ENCODE measurements at regions of chr4 and their contacts with region 1.

Region 1: DNA sequence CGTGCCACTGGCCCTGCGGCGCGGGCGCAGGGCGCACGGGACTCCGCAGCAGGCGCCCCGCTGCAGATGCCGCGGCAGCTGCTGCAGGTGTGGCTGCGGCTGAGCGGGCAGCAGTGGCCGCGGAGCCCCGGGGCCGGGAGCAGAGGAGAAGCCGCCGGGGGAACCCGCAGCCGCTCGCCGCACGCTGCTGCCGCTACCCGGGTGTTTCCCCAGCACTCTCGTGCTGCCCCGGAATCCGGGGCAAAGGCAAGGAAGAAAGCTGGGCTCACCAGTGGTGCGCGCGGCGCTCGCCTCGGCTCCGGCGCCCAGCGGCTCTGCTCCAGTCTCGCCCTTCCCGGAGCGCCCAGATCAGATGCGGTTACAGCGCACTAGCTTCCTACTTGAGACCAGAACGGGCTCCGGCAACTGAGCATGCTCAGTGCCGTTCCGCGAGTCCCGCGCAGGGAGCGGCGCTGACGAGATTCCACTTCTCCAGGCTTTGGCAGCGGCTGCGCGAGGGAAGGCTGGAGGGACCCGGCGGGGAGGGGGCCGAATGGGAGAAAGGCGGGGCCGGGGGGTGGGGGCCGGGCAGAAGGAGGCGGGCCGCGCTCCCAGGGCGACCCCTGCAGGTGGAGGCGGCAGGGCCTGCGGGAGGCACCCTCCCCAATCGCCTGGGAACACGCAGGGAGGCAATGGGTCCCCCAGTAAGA is at the start of gene APBB2:
- DNase-seq: peak; percentile 96
- ATAC-seq: peak; percentile 93 to 94
- total RNA-seq, gene APBB2: 53.0 to 56.5 TPM

Region 2: DNA sequence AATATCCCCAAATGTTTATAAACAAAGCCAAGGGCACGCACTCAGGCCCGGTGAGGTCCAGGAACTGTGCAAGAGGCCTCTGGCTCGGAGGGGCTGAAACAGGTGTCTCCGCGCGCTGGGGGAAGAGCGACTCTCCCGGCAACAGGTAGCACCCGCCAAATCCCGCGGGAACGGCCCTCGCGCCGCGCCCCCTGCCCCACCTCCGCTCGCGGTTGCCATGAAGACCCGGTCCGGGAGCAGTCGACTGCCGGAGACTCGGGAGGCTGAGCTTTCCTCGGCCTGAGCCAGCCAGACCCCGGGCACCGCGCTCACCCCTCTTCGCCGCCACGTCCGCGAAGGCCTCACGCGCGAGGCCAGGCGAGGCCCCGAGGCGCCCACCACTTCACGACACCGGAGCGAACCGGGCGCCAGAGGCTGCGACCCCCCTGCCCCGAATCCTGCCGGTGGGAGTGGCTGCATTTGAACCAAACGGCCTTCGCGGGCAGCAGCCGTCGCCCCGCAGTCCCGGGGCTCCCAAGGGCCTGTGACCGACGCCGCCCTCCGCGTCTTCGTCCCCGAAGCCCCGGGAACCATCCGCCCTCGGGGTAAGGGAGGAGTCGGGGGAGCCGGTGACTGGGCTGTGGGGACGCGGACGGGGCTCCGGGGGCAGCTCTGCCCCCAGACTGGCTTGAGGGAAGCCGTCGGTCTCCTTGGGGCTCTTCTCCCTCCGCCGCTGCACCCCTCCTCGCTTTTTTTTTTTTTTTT is 464.4 kb before region 1 on chr4 and contains the start of gene NSUN7:
- intact Hi-C with region 1: loop called in 1 of 2 experiments (anchors 10 kb)
- DNase-seq: peak; percentile 62
- ATAC-seq: peak; percentile 91 to 92
- total RNA-seq, gene NSUN7: 4.2 to 6.6 TPM

Region 3: GRCh38 chr4:40924096-40924792 is 290.0 kb before region 1 on chr4:
- intact Hi-C with region 1: loop called (anchors 5 kb)
- DNase-seq: peak; percentile 68
- ATAC-seq: peak; percentile 62 to 67

Region 4: GRCh38 chr4:40976343-40976742 is 237.9 kb before region 1 on chr4:
- intact Hi-C with region 1: loop called (anchors 2 to 5 kb)
- DNase-seq: no peak
- ATAC-seq: peak; percentile 41 to 47

Region 5: DNA sequence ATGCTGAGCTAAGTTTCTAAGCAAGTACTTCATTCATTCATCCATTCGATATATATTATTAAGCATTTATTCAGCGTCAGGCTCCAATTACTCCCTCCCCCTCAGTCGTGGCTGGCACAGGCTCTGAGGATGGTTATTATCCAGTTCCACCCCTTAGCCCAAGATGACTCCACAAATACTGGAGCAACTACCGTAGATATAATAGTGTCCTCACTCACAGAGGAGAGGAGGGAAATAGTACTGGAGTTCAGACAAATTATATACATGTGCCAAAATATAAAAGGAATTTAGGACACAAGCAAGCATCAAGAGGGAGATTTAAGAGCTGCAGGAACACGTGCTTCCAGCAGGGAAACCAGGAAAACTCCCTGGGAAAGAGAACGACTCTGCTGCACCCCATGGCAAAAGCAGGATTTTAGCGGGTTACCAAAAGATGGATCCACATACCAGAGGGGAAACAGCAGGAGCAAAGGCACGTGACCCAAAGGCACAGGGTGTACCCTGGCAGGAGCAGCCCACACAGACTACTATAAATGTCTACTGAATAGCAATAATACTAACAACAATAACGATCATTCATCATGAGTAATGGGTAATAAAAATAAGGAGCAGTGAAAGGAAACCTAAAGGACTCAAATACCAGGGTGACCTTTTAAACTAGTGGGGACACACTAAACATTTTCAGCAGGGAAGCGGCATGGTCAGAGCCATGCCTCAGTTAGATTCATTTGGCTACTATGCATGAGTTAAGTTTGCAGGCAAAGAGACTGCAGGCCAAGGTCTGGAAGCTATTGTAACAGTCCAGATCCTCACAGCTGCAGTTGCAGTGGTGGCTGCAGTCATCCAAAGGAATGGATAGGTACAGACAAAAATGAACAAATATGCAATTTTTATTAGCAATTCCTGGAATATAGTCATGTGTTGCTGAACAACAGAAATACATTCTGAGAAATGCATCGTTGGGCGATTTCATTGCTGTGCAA is 153.6 kb before region 1 on chr4:
- intact Hi-C with region 1: loop called in 1 of 2 experiments (anchors 5 kb)
- DNase-seq: no peak
- ATAC-seq: peak; percentile 46 to 52

Region 6: DNA sequence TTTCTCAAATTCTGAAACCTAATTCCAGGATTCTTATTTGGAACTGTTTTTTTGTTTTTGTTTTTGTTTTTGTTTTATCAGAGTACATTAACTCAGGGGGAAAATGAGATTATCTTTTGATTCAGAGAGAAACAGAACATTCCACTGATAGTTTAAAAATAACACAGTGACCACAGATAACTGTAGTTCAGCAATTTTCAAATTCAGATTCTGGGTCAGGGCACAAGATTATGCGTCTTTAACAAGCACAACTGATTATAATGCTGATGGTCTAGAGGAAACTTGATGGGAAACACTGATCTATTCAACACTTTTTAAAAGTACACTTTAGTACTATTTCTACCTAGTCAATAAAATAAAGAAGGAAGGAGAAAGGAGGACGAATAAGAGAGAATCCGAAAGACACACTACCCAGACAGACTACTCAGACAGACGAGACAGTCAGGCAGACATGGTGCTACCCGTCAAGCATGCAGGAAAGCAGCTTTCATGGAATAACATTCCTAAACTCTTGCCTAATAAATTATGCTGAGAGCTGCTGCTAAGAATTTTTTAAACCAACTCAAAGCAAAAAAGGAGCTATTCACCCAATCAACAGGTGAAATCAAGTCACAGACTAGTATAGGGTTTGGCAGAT is 59.0 kb before region 1 on chr4:
- intact Hi-C with region 1: loop called in 1 of 2 experiments (anchors 5 kb)
- DNase-seq: no peak
- ATAC-seq: peak; percentile 81 to 91

Measured in left cardiac atrium (tissue), 4 donors.